A673 (cell line): ENCODE measurements at regions of chr1 and their contacts with region 1.

Region 1: GRCh38 chr1:202858331-202858730 is 30.6 kb downstream of the RABIF start:
- DNase-seq: no peak
- H3K4me3 ChIP-seq: no peak overlapping the region
- H3K27ac ChIP-seq: no peak overlapping the region
- H3K4me1 ChIP-seq: no peaks in the 10 kb centered on the region
- H3K27me3 ChIP-seq: peaks cover 30% of the 10 kb centered on the region
- CTCF ChIP-seq: no peak

Region 2: DNA sequence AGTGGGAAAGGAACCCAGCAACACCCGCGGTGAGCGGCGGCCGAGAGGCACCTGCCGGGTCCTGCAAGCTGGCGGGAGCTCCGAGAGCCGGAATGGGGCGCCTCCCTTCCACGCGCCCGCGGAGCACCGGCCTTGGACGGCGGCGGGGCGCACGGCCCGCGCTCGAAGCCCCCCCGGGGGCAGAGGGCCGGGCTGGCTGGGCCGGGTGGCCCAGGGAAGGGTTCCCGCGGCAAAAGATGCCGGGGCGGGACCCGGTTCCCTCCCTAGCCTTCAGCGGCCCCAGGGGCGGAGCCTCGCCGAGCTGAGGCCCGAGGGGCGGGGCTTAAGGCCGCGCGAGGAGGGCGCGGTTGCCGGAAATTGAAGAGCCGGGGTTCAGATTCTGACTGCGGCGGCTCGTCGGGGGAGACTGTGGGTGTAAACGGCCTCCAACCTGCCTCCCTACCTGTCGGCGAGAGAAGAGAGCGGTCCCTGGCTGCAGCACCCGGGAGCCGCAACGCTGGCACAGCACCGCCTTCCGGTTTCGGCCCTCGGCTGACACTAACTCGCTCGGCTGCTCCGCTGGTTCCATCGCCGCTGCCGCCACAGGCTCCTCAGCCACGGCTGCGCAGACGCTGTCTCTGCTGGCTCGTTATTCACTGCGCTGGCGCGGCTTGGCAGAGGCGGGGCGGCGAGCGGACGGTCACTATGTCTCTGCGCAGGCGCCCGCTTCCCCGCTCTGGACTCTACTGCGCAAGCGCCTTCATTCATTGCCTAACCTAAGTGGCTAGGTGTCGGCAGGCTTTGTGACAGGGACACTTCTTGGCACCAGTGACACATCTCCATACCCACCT is 30.4 kb after region 1 on chr1 and contains the start of gene RABIF:
- CTCF ChIA-PET with region 1: no interaction called
- POLR2A ChIA-PET with region 1: interaction called, 11 read pairs
- intact Hi-C with region 1: no loop called
- DNase-seq: peak; percentile 98
- H3K4me3 ChIP-seq: peak within 1 kb of the TSS; percentile 73
- H3K27ac ChIP-seq: peak within 1 kb of the TSS; percentile 84
- H3K4me1 ChIP-seq: no peaks in the 10 kb centered on the region
- H3K27me3 ChIP-seq: no peaks in the 10 kb centered on the region
- CTCF ChIP-seq: 0 out of 2 replicates have a peak, but pooled peaks have one; percentile 18
- total RNA-seq, gene RABIF: 11.1 and 12.2 TPM in 2 replicates